Body of pancreas (tissue), 4 donors: ENCODE measurements at regions of chr17 and their contacts with region 1.

Region 1: DNA sequence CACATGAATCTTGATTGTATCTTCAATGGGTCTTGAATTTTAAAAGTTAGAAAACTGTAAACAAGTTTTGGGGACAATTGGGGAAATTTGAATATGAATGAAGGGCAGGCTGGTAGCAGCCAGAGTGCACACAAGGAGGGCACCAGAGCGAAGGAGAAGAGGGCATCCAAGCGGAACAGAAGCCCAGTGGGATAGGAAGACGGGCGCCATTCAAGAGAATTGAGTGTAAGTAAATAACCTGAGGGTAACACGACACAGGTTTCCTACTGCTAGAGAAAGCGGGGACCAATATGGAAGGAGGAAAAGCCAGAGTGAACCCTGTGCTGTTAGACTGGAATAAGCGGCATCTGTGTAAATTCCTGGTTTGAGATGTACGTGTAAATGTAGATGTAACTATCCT is 115.1 kb upstream of the CCL2 start:
- DNase-seq: no peak
- ATAC-seq: no peak
- H3K4me3 ChIP-seq: no peak overlapping the region
- H3K27ac ChIP-seq: no peak overlapping the region
- H3K4me1 ChIP-seq: no peaks in the 10 kb centered on the region
- H3K27me3 ChIP-seq: no peaks in the 10 kb centered on the region
- CTCF ChIP-seq: no peak
- POLR2A ChIP-seq: no peak

Region 2: GRCh38 chr17:33779225-33779591 is 360.8 kb before region 1 on chr17:
- intact Hi-C with region 1: loop called (anchors 5 kb)
- DNase-seq: peak; percentile 50 to 71 (median 63)
- ATAC-seq: peak; percentile 53
- H3K4me3 ChIP-seq: no peak overlapping the region
- H3K27ac ChIP-seq: no peak overlapping the region
- H3K4me1 ChIP-seq: no peaks in the 10 kb centered on the region
- H3K27me3 ChIP-seq: no peaks in the 10 kb centered on the region
- CTCF ChIP-seq: peak; percentile 90 to 100 (median 92)
- POLR2A ChIP-seq: no peak